AG04449 (cell line): ENCODE measurements at regions of chr7 and their contacts with region 1.

Region 1: DNA sequence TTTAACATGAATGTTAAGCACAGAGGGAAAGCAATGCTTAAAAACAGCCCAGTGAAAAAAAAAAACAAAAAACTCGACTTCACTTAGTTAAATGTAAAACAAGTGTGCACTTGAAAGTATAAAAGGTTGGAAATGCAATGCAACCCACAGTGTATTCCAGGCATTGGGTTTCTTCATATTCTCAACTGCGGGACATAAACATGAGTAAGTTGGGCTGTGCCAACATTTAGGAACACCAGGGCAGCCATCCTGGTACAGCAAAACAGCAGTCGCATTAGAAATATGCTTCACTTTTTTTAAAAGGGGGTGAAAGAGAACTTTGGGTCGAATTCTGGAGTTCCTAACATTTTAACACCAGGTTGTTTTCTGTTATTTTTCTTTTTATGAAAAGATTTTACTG is 937 bp downstream of the STEAP1 start:
- DNase-seq: no peak
- H3K4me3 ChIP-seq: no peak overlapping the region; the same call in 1 of the 2 replicates
- CTCF ChIP-seq: no peak

Region 2: GRCh38 chr7:90211391-90212148 is 56.4 kb after region 1 on chr7 and contains the start of gene STEAP2:
- CTCF ChIA-PET with region 1: interaction called, 13 read pairs
- POLR2A ChIA-PET with region 1: interaction called, 4 read pairs
- DNase-seq: peak; percentile 53
- H3K4me3 ChIP-seq: peak within 1 kb of the TSS; percentile 68
- CTCF ChIP-seq: peak; percentile 95

Region 3: DNA sequence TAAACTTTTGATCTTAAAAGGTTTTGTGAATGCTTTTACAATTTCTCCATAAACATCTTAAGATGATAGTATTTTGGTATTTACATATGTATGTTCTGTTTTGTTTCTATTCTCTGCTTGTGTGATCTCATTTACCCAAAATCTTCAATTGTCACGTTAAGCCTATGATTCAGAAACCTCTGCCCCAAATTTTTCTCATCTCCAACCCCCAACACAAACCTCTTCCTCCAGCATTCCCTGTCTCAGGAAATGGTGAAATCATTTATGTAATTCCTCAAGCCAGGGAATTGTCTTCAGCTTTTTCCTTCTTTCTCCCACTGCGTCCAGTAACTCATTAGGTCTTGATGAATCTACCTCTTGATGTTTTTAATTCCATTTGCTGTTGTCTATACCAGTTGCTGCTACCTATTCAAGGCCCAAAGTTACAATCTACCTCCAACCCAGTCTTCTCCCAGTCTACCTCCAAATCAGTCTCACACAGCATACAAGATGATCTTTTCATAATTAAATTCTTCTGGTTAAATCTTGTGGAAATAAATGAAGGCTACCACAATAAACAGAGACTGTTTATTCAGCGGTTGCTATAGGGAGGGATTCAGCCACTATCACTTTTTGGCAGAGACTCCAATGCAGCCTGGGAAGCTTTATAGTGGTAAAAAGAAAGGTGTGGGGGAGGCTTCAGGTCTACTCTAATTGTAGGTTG is 95.5 kb after region 1 on chr7:
- CTCF ChIA-PET with region 1: interaction called, 11 read pairs
- POLR2A ChIA-PET with region 1: no interaction called
- DNase-seq: no peak
- H3K4me3 ChIP-seq: no peak overlapping the region
- CTCF ChIP-seq: no peak

Region 4: GRCh38 chr7:90256778-90257177 is 101.6 kb after region 1 on chr7:
- CTCF ChIA-PET with region 1: interaction called, 53 read pairs
- POLR2A ChIA-PET with region 1: no interaction called
- DNase-seq: no peak
- H3K4me3 ChIP-seq: no peak overlapping the region
- CTCF ChIP-seq: no peak

Region 5: GRCh38 chr7:90262438-90262837 is 107.2 kb after region 1 on chr7:
- CTCF ChIA-PET with region 1: interaction called, 80 read pairs
- POLR2A ChIA-PET with region 1: no interaction called
- DNase-seq: no peak
- H3K4me3 ChIP-seq: no peak overlapping the region
- CTCF ChIP-seq: no peak

Region 6: GRCh38 chr7:90298145-90299038 is 143.2 kb after region 1 on chr7:
- CTCF ChIA-PET with region 1: interaction called, 17 read pairs
- POLR2A ChIA-PET with region 1: no interaction called
- DNase-seq: no peak
- H3K4me3 ChIP-seq: no peak overlapping the region
- CTCF ChIP-seq: peak; percentile 61

Region 7: GRCh38 chr7:90424720-90425119 is 269.5 kb after region 1 on chr7:
- CTCF ChIA-PET with region 1: interaction called, 97 read pairs
- POLR2A ChIA-PET with region 1: no interaction called
- DNase-seq: no peak
- H3K4me3 ChIP-seq: no peak overlapping the region
- CTCF ChIP-seq: no peak